Posterior vena cava (tissue), 2 donors: ENCODE measurements at regions of chr10 and their contacts with region 1.

Region 1: DNA sequence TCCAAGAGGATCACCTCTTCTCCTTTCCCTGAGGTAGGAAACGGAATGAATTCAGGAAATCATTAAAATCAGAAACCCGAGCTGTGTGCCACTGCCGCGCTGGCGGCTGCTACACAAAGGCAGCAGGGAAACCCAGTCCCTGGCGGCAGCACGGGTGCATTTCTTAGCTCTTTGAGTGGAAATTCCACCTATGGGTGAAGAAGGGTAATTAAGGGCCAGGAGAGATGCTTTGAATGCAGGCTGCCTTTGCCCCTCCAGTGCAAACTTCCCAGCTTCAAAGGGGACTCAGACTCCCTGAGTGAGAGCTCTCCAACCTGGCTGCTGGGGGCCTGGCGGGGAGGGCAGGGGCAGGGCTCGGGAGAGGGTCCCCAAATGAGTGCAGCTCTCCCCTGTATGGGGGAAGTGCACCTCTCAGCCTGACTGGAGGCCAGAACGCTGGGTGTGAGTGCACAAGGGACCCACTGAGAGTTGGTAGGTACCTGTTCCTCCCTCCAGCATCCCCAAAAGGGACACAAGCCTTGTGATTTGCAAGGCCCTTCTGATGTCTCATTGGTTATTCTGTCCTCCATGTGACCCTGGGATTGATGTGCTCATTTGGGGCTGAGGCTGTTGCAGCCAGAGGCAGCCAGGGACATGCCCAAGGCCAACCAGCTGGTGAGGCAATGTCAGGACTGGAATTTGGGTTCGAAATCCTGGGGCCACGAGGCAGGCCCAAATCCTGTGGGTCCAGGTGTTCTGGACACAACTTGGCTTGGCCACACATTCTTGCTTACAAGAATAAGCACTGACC is 16.3 kb upstream of the ZMIZ1 start:
- DNase-seq: peak; percentile 49

Region 2: DNA sequence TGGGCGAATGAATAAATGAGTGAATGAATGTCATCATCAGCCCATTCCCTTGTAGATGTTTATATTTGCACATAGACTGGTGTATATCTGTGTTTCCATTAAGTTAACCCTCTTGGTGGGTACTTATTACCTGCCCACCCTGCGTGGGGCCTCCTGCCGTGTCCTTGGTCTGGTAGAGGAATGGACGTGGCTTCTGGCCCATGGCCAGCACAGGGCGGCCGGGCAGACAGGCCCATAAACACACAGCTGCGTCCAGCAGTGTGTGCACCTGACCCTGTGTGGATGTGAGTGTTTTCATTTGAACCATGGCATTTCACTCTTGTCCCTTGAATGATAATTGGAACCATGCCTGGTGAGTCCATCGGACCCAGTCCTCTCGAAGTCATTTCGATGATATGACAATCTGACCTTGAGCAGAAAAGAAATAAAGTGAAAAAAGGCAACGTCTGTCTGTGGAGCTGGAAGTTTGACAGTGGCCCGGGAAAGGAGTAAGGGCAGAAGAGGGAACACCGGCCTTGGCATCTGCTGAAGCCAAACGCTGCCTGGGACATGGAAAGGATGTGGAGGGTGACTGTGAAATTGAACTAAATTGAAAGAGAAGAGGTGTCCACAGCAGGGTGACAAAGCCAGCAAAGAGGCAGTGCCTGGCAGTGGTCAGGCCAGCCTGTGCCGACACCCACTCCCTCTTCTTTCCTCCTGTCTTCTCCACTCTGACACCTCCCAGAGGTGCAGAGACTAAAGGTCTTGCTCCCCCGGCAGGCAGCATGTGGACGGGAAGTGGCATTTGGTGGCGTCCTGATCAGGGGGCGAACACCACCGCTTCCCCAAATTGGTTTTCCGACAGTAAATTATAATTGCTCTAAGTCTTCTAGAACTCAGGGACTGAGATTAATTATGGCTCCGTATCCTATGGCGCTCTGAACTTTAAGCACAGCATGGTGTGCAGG is 182.7 kb before region 1 on chr10:
- intact Hi-C with region 1: loop called in 1 of 2 experiments (anchors 10 kb)
- DNase-seq: no peak

Region 3: GRCh38 chr10:78972947-78973900 is 79.3 kb before region 1 on chr10:
- intact Hi-C with region 1: loop called in 1 of 2 experiments (anchors 5 kb)
- DNase-seq: peak; percentile 92

Region 4: GRCh38 chr10:79007421-79008319 is 44.8 kb before region 1 on chr10:
- intact Hi-C with region 1: loop called in 1 of 2 experiments (anchors 1 kb)
- DNase-seq: no peak